BJ (cell line): ENCODE measurements at regions of chr7 and their contacts with region 1.

Region 1: DNA sequence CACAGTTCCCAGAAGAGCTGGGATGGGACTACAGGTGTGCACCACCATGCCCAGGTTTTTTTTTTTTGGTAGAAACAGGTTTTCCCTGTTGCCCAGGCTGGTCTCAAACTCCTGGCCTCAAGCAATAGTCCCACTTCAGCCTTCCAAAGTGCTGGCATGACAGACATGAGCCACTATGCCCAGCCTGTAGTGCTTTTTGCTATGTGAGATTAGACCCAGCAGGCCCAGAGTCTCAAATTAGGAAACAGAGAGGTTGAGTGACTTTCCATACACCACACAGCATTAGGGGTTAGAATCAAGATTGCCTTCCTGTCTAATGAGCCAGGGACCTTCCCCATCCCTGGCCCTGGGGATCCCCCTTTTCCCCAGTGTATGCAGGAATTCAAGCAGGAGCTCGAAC is 90.8 kb upstream of the KCTD7 start:
- DNase-seq: no peak
- H3K4me3 ChIP-seq: no peak overlapping the region
- H3K27me3 ChIP-seq: no peaks in the 10 kb centered on the region
- CTCF ChIP-seq: no peak

Region 2: GRCh38 chr7:66075590-66076461 is 462.1 kb before region 1 on chr7 and contains the start of gene ASL:
- CTCF ChIA-PET with region 1: no interaction called
- POLR2A ChIA-PET with region 1: interaction called, 12 read pairs
- DNase-seq: peak; percentile 50
- H3K4me3 ChIP-seq: peak within 1 kb of the TSS; percentile 95
- H3K27me3 ChIP-seq: no peaks in the 10 kb centered on the region
- CTCF ChIP-seq: no peak
- polyA plus RNA-seq, gene ASL: 37.1 and 57.2 TPM in 2 replicates

Region 3: GRCh38 chr7:66557608-66558143 is 19.8 kb after region 1 on chr7:
- CTCF ChIA-PET with region 1: no interaction called
- POLR2A ChIA-PET with region 1: no interaction called
- DNase-seq: no peak
- H3K4me3 ChIP-seq: no peak overlapping the region
- H3K27me3 ChIP-seq: no peaks in the 10 kb centered on the region
- CTCF ChIP-seq: peak; percentile 98